Right lobe of liver (tissue), 6 donors: ENCODE measurements at regions of chr16 and their contacts with region 1.

Region 1: GRCh38 chr16:8572919-8573724 is 17.2 kb downstream of the TMEM114 start:
- DNase-seq: no peak
- ATAC-seq: peak; percentile 38 to 71 (median 66)
- H3K4me3 ChIP-seq: no peak overlapping the region
- H3K27ac ChIP-seq: no peak overlapping the region
- H3K4me1 ChIP-seq: no peaks in the 10 kb centered on the region
- H3K27me3 ChIP-seq: no peaks in the 10 kb centered on the region
- CTCF ChIP-seq: peak; percentile 41 to 50 (median 49)
- POLR2A ChIP-seq: no peak

Region 2: DNA sequence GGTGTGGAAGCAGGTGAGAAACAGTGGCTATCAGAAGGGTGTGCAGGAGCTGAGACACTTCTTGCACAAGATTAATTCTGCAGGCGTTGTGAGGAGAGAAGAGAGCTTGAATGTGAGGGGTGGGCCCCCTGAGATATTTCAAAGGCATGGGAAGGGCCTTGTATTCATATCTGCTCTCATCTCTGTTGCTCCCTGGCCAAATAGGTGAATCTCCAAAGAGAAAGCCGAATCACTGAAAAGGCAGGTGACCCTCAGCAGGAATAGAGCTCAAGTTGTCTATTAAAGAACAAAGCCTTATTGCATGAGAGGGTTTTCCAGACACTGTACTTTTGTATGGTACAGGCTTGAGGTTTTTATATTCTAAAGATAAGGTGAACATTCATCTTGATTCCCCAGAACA is 355.9 kb before region 1 on chr16:
- intact Hi-C with region 1: no loop called
- DNase-seq: no peak
- ATAC-seq: no peak
- H3K4me3 ChIP-seq: no peak overlapping the region
- H3K27ac ChIP-seq: no peak overlapping the region
- H3K4me1 ChIP-seq: no peaks in the 10 kb centered on the region
- H3K27me3 ChIP-seq: no peaks in the 10 kb centered on the region
- CTCF ChIP-seq: no peak
- POLR2A ChIP-seq: no peak

Region 3: GRCh38 chr16:8634991-8635736 is 62.0 kb after region 1 on chr16:
- intact Hi-C with region 1: loop called in 1 of 2 experiments (anchors 10 kb)
- DNase-seq: no peak
- ATAC-seq: no peak
- H3K4me3 ChIP-seq: no peak overlapping the region
- H3K27ac ChIP-seq: no peak overlapping the region
- H3K4me1 ChIP-seq: no peaks in the 10 kb centered on the region
- H3K27me3 ChIP-seq: no peaks in the 10 kb centered on the region
- CTCF ChIP-seq: no peak
- POLR2A ChIP-seq: no peak